CD8-positive, alpha-beta T cell (primary cell): ENCODE measurements at regions of chr17 and their contacts with region 1.

Region 1: DNA sequence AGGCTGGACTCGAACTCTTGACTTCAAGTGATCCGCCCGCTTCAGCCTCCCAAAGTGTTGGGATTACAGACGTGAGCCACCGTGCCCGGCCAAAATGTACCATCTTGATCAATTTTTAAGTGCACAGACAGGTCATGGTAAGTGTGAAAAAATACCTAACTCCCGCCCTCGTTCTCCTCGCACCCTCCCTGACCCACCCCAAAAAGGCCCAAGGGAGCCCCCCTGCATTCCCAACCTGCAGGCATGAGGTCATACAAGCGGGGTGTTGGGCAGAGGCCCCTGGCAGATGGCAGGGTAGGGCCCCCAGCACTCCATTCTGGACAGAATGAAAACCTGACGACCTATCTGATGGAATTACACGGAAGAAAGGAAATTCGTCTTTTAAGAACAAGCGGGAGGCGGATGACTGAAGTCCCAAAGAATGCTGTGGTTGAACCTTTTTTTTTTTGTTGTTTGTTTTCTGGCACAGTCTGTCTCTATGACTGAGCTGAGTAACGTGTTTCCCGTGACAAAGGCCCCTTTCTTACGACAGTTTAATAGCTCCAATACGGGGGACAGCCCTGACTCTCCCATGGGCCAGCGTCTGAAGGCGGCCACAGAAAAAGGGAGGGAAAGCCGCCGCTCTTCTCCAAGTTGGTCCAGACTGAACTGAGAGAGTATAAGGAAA is 376.4 kb downstream of the SLC39A11 start:
- DNase-seq: no peak
- ATAC-seq: no peak
- H3K4me3 ChIP-seq: no peak overlapping the region
- H3K4me3 Mint-ChIP-seq: no peak overlapping the region
- H3K27ac ChIP-seq: no peak overlapping the region
- H3K27ac Mint-ChIP-seq: no peak overlapping the region
- H3K4me1 ChIP-seq: peaks cover 20% of the 10 kb centered on the region
- H3K4me1 Mint-ChIP-seq: peaks cover 23% of the 10 kb centered on the region
- H3K27me3 ChIP-seq: no peaks in the 10 kb centered on the region
- H3K27me3 Mint-ChIP-seq: no peaks in the 10 kb centered on the region
- CTCF ChIP-seq: no peak

Region 2: DNA sequence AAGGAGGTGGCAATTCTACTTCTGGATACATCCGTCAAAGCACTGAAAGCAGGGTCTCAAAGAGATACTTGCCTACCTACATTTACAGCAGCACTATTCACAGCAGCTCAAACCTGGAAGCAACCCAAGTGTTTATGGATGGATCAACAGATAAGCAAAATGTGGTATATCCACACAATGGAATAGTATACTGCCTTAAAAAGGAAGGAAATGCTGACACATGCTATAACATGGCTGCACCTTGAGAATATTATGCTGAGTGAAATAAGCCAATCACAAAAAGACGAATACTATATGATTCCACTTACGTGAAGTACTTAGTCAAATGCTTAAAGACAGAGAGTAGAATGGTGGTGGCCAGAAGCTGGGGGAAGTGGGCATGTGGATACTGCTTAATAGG is 40.2 kb after region 1 on chr17:
- CTCF ChIA-PET with region 1: no interaction called
- POLR2A ChIA-PET with region 1: no interaction called
- intact Hi-C with region 1: loop called in 1 of 2 experiments (anchors 1 kb)
- DNase-seq: no peak
- ATAC-seq: no peak
- H3K4me3 ChIP-seq: no peak overlapping the region
- H3K4me3 Mint-ChIP-seq: no peak overlapping the region
- H3K27ac ChIP-seq: no peak overlapping the region
- H3K27ac Mint-ChIP-seq: no peak overlapping the region
- H3K4me1 ChIP-seq: no peaks in the 10 kb centered on the region
- H3K4me1 Mint-ChIP-seq: no peaks in the 10 kb centered on the region
- H3K27me3 ChIP-seq: no peaks in the 10 kb centered on the region
- H3K27me3 Mint-ChIP-seq: no peaks in the 10 kb centered on the region
- CTCF ChIP-seq: no peak